Activated CD4-positive, alpha-beta T cell treated with anti-CD3 and anti-CD28 coated beads for 36 hours (primary cell): ENCODE measurements at regions of chr2 and their contacts with region 1.

Region 1: GRCh38 chr2:128321784-128322714 is 3.4 kb upstream of the HS6ST1 start:
- DNase-seq: peak; percentile 89
- ATAC-seq: peak; percentile 52
- H3K4me3 Mint-ChIP-seq: peak overlapping the region; percentile 51
- H3K27ac Mint-ChIP-seq: peak overlapping the region; percentile 60
- H3K4me1 Mint-ChIP-seq: peaks cover 6% of the 10 kb centered on the region
- H3K27me3 Mint-ChIP-seq: no peaks in the 10 kb centered on the region

Region 2: DNA sequence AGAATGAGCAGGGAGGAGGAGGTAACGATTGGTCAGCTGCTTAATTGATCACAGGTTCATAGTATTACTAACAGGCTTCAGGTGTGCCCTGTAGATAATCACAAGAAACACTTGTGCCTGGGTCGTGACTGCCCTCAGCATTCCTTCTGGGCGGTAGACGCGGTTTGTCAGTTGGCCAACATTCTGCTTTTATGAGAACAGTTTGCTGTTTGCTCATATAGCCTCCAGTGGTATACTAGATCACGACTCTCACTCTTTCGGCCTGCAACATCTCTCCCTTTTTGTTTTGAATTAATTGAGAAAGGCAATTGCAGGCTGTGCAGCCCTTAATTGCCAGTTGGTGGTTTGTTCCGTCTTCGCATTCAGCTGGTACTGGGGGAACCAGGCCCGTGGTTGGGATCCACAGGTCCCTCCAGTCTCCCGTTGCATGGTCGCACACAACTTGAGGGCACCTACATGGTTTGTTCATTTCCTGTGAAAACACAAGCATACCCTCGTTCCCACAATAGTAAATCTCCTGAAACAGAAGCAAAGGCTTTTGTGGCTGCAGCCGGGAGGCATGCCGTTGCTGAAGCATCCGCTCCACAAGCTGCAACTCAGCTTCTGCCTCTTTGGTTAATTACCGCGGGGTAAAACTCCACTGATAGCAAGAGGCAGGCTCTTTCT is 706.4 kb before region 1 on chr2:
- CTCF ChIA-PET with region 1: no interaction called
- POLR2A ChIA-PET with region 1: no interaction called
- intact Hi-C with region 1: no loop called
- DNase-seq: peak; percentile 15
- ATAC-seq: peak; percentile 19
- H3K4me3 Mint-ChIP-seq: no peak overlapping the region
- H3K27ac Mint-ChIP-seq: no peak overlapping the region
- H3K4me1 Mint-ChIP-seq: peaks cover 20% of the 10 kb centered on the region
- H3K27me3 Mint-ChIP-seq: peaks cover 3% of the 10 kb centered on the region

Region 3: GRCh38 chr2:128090945-128091725 is 230.9 kb before region 1 on chr2 and contains the start of gene UGGT1:
- CTCF ChIA-PET with region 1: interaction called, 3 read pairs
- POLR2A ChIA-PET with region 1: no interaction called
- intact Hi-C with region 1: loop called in 1 of 2 experiments (anchors 2 kb)
- DNase-seq: peak; percentile 96
- ATAC-seq: peak; percentile 95
- H3K4me3 Mint-ChIP-seq: peak within 1 kb of the TSS; percentile 90
- H3K27ac Mint-ChIP-seq: peak within 1 kb of the TSS; percentile 93
- H3K4me1 Mint-ChIP-seq: peaks cover 44% of the 10 kb centered on the region
- H3K27me3 Mint-ChIP-seq: no peaks in the 10 kb centered on the region
- total RNA-seq, gene UGGT1: 50.0 to 67.2 TPM

Region 4: DNA sequence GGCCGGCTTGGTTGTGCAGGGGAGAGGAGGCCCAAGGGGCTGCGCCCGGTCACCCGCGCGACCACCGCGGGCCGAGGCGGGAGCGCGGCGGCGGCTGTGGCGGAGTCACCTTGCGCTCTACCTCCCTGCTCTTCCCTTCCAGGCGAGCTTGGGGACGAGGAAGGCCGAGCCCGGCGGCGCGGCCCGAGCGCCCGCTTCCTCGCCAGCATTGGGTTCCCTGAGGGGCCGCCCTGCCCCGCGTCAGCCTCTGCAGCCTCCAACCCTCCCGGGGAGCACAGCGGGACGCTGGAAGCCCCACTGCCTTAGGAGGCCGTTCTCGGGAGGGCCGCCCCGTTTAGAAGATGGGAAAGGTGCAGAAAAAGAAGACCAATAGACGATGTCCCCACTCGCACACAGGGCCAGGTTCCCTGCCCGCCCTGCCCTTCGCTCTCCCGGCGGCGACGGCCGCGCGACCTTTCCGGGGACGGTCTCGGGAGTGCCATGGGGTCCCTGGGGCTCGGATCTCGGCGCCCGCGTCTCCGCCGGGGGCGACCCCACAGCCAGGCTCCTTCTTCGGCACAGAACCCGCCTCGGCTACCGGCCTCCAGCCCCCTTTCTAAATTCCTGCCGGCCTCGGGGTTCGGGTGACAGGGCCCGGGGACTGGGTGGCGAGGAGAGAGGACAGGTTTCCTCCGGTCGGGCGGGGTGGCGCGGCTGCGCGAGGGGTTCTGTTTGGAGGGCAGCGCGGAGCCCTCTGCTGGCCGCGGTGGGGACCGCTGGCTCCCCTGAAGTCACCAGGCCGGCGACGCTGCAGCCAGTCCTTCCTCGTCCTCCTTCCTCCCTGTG is 88.9 kb before region 1 on chr2:
- CTCF ChIA-PET with region 1: no interaction called
- POLR2A ChIA-PET with region 1: no interaction called
- intact Hi-C with region 1: loop called in 1 of 2 experiments (anchors 2 kb)
- DNase-seq: peak; percentile 94
- ATAC-seq: peak; percentile 98
- H3K4me3 Mint-ChIP-seq: peak overlapping the region; percentile 67
- H3K27ac Mint-ChIP-seq: no peak overlapping the region
- H3K4me1 Mint-ChIP-seq: peaks cover 2% of the 10 kb centered on the region
- H3K27me3 Mint-ChIP-seq: peaks cover 3% of the 10 kb centered on the region

Region 5: DNA sequence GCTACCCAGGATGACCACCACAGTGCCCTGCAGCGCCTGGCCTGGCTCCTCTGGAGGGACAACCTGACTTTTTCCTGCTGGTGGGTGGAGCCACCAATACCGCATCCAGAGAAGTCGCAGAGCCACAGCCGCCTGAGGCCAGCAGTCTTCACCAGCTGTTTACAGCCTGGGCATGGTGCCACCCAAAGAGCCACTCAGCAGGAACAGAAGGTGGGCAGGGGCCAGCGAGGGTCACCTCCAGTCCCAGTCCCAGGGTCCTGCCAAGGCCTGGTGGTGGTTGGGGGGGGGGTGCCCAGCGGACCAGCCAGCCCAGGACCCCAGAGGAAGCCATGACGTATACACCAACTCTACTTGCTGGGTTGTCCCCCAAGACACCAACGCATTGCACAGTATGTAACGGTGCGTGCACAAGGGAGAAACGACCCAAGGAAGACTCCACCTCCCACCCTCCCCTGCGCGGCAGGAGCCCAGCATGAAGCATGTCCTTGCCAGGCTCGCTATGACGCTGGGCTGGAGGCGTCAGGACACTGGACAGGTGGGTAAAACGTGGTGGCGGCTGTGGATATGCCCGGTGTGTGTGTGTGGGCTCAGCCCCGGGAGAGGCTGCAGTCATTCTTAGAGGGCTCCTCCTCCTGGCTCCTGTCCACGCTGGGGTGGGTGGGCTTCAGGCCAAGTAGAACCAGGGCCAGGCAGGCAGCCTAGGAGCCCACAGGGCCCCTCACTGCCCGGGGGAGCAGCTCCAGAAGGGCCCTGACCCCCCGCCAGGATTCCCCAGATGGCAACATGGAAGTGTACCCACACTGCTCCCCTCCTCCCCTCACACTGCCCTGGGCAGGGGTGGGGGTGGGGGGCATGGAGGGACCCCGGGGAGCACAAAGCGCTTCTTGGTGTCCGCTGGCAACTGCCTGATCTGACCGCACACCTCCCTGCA is 52.7 kb before region 1 on chr2:
- CTCF ChIA-PET with region 1: no interaction called
- POLR2A ChIA-PET with region 1: no interaction called
- intact Hi-C with region 1: no loop called
- DNase-seq: peak; percentile 2
- ATAC-seq: no peak
- H3K4me3 Mint-ChIP-seq: no peak overlapping the region
- H3K27ac Mint-ChIP-seq: no peak overlapping the region
- H3K4me1 Mint-ChIP-seq: no peaks in the 10 kb centered on the region
- H3K27me3 Mint-ChIP-seq: no peaks in the 10 kb centered on the region

Region 6: DNA sequence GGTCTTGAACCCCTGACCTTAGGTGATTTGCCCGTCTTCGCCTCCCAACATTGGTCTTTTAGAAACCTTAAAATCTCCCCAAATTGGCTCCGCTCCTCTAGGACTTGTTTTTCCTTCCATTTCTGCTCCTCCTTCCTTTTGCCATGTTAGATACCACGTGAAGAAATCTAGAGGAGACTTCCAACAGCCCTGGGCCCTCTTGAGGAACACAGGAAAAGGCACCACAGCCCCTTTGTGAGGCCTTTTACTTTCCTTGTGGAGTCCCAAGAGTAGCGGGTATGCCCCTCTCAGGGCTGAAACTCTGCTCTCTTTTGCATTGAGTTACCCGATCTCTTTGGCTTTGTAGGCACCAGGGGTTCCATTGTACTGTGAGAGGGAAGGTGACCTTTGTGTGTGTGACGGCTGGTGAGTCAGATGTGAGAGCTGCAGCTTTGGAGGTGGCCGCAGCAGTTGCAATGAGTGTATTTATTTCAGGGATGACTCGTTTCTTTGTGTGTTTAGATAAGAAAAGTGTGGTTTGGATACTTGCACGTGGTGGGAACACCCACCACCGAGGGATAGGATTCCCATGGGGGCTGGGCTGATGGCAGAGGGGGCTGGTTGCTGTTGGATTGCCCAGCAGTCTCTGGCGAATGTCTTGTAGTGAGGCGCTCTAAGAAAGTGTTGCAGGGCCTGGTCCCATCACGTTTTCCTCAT is 215.0 kb after region 1 on chr2:
- CTCF ChIA-PET with region 1: interaction called, 4 read pairs
- POLR2A ChIA-PET with region 1: no interaction called
- intact Hi-C with region 1: loop called (anchors 5 to 10 kb)
- DNase-seq: peak; percentile 70
- ATAC-seq: peak; percentile 90
- H3K4me3 Mint-ChIP-seq: no peak overlapping the region
- H3K27ac Mint-ChIP-seq: no peak overlapping the region
- H3K4me1 Mint-ChIP-seq: peaks cover 14% of the 10 kb centered on the region
- H3K27me3 Mint-ChIP-seq: peaks cover 9% of the 10 kb centered on the region

Region 7: GRCh38 chr2:128736689-128737545 is 414.9 kb after region 1 on chr2:
- CTCF ChIA-PET with region 1: no interaction called
- POLR2A ChIA-PET with region 1: no interaction called
- intact Hi-C with region 1: loop called in 1 of 2 experiments (anchors 5 kb)
- DNase-seq: peak; percentile 84
- ATAC-seq: peak; percentile 55
- H3K4me3 Mint-ChIP-seq: peak overlapping the region; percentile 47
- H3K27ac Mint-ChIP-seq: no peak overlapping the region
- H3K4me1 Mint-ChIP-seq: peaks cover 6% of the 10 kb centered on the region
- H3K27me3 Mint-ChIP-seq: peaks cover 9% of the 10 kb centered on the region

Region 8: GRCh38 chr2:129877289-129877779 is 1555.3 kb after region 1 on chr2:
- CTCF ChIA-PET with region 1: no interaction called
- POLR2A ChIA-PET with region 1: no interaction called
- intact Hi-C with region 1: loop called in 1 of 2 experiments (anchors 5 kb)
- DNase-seq: peak; percentile 90
- ATAC-seq: peak; percentile 95
- H3K4me3 Mint-ChIP-seq: peak overlapping the region; percentile 87
- H3K27ac Mint-ChIP-seq: peak overlapping the region; percentile 87
- H3K4me1 Mint-ChIP-seq: peaks cover 11% of the 10 kb centered on the region
- H3K27me3 Mint-ChIP-seq: no peaks in the 10 kb centered on the region